ENCODE measurements at regions of chr1 and their contacts with region 1.

Region 1: DNA sequence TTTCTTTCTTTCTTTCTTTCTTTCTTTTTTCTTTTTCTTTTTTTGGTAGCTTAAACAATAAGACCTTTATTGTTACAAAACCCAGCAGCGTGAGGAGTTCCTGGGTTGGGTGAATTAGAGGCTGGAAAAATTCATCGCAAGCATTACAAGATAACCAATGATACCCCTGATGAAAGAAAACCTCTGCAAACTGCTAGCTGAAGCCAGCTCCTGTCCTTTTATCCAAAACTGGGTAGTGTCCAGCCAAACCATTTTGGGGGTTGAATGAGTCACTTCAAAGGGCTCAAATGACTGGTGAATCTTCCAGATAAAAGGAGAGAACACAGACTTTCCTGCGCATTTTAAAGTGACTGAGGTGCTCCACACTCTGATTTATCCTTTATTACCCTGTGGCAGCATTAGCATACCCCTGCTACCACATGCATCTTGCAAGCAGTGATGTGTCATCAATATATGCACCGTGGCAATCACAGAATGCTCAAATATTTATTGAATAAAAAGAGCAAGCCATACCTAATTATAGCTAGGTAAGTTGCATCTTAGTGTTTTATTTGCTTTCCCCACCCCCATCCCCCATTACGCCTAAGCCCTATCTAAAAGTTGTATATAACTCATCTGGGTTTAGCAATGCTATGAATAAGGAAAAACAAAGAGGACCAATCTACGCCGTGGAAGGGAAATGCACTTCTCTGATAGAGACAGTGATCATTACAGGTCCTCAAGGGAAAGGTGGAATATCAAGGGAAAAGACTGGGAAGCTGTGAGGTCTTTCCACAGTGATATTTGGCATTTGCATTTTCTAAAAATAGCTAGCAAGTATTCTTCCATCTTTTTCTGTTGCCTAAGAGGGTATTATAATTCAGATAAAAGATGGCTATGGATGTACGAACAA is 32.4 kb upstream of the CEP350 start:
- DNase-seq: peak; percentile 19
- H3K4me3 ChIP-seq: no peak overlapping the region
- H3K27ac ChIP-seq: no peak overlapping the region
- H3K4me1 ChIP-seq: peaks cover 16% of the 10 kb centered on the region
- H3K27me3 ChIP-seq: no peaks in the 10 kb centered on the region

Region 2: DNA sequence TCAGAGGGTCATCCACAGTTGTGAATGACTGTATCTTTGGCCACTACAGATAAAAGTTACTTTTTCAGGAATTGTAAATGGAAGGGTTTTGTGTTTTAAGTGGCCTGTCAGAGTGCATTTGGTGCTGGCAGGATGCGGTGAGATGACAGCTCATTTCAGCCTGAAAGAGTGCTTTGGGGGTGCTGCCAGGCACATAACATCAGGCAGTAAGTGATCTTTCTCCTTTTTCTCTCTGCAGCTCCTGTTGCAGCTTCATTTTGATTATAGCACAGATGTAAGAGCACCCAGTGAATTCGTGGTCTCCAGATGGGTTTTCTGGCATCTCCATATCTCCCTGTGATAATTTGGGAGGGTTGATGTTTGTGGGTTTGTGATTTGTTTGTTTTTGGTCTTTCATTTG is 194.0 kb before region 1 on chr1:
- in situ Hi-C with region 1: no loop called
- DNase-seq: peak; percentile 11
- H3K4me3 ChIP-seq: no peak overlapping the region
- H3K27ac ChIP-seq: no peak overlapping the region
- H3K4me1 ChIP-seq: no peaks in the 10 kb centered on the region
- H3K27me3 ChIP-seq: peaks cover 19% of the 10 kb centered on the region

Region 3: DNA sequence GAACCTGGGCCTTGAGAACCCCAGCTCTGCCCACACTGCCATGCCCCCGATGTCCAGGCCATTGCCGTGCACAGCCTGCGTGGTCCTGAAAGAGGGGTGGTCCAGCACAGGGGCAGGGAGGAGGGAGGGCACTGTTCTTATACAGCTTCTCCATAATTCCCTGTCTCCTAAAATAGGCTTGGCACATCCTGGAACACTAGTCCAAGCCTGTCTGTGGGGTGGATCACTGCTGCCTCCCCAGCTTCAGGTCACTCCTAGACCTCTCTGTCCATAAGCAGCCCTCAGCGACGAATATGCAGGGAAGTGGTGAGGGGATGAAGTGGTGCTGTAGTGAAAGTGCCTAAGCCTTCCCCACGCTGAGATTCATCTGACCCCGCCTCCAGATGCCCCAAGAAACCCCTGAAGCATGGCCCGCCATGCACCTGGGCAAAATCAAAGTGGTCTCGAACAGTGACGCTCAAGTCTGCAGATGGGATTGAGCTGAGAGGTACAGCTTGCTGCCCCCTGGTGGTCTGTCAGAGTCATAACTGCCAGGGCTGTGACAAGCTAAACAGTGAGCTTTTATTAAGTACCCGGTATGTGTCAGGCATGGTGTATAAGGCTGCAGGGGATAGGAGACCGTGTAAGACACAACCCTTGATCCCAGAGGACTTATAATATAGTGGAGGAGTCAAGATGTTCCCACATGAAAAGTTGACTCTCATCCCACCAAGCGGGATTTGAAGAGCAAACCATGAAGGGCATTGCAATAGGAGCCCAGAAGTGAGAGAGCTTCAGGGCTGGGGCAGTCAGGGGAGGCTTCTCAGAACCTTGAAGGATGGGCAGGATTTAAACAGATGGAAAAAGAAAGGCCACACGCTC is 112.5 kb before region 1 on chr1:
- in situ Hi-C with region 1: no loop called
- DNase-seq: peak; percentile 78
- H3K4me3 ChIP-seq: no peak overlapping the region
- H3K27ac ChIP-seq: no peak overlapping the region
- H3K4me1 ChIP-seq: no peaks in the 10 kb centered on the region
- H3K27me3 ChIP-seq: peaks cover 15% of the 10 kb centered on the region; the same call in 1 of the 2 replicates

Region 4: GRCh38 chr1:180003026-180003695 is 80.9 kb after region 1 on chr1:
- in situ Hi-C with region 1: loop called (anchors 25 kb)
- DNase-seq: no peak
- H3K4me3 ChIP-seq: no peak overlapping the region
- H3K27ac ChIP-seq: no peak overlapping the region
- H3K4me1 ChIP-seq: peaks cover 13% of the 10 kb centered on the region
- H3K27me3 ChIP-seq: no peaks in the 10 kb centered on the region

Measured in GM23248 (cell line).